Activated T-helper 2 cell treated with anti-CD3 and anti-CD28 coated beads, Interferon-gamma antibody, Interleukin-2, Interleukin-4, amounts not matched to agents 10 μg/mL and 5 μg/mL and 100 μg/mL, durations not matched to agents 14 hours and 24 hours and 36 hours (primary cell): ENCODE measurements at regions of chr11 and their contacts with region 1.

Region 1: DNA sequence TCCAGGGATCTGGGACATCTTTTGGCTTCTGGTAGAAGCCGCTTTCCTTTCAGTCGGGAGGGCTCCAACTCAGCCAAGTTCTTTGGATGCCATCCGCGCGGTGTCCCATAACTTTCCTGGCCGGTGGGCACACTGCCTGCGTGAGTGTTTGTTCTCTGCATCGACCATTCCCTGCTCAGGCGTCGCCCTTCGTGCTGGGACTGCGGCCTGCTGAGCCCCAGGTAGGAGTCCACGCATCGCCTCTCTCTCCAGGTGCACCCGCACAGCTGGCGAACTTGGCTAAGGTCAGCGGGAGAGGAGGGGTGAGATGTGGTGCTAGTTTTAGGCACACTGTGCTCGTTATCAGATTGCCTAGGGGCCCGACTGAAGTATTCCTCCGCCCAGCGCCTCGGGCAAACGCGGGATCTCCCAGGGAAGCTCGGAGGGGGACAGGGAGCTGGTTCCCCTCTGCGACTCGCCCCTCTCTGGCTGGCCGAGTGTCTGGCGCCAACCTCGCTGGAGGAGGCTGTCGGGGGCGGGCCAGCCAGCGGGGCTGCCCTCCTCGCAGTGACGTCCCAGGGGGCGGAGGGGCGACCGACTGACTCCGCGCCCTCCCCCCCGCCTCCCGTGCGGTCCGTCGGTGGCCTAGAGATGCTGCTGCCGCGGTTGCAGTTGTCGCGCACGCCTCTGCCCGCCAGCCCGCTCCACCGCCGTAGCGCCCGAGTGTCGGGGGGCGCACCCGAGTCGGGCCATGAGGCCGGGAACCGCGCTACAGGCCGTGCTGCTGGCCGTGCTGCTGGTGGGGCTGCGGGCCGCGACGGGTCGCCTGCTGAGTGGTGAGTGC is at the start of gene LAYN:
- DNase-seq: peak; percentile 14
- H3K4me3 Mint-ChIP-seq: peak within 1 kb of the TSS; percentile 72
- H3K27ac Mint-ChIP-seq: peak within 1 kb of the TSS; percentile 65
- H3K4me1 Mint-ChIP-seq: peaks cover 24% of the 10 kb centered on the region
- H3K27me3 Mint-ChIP-seq: peaks cover 72% of the 10 kb centered on the region
- total RNA-seq, gene LAYN: 15.8 and 16.5 TPM in 2 replicates

Region 2: GRCh38 chr11:111063726-111064517 is 476.4 kb before region 1 on chr11:
- intact Hi-C with region 1: no loop called
- DNase-seq: no peak
- H3K4me3 Mint-ChIP-seq: no peak overlapping the region
- H3K27ac Mint-ChIP-seq: no peak overlapping the region
- H3K4me1 Mint-ChIP-seq: no peaks in the 10 kb centered on the region
- H3K27me3 Mint-ChIP-seq: no peaks in the 10 kb centered on the region

Region 3: DNA sequence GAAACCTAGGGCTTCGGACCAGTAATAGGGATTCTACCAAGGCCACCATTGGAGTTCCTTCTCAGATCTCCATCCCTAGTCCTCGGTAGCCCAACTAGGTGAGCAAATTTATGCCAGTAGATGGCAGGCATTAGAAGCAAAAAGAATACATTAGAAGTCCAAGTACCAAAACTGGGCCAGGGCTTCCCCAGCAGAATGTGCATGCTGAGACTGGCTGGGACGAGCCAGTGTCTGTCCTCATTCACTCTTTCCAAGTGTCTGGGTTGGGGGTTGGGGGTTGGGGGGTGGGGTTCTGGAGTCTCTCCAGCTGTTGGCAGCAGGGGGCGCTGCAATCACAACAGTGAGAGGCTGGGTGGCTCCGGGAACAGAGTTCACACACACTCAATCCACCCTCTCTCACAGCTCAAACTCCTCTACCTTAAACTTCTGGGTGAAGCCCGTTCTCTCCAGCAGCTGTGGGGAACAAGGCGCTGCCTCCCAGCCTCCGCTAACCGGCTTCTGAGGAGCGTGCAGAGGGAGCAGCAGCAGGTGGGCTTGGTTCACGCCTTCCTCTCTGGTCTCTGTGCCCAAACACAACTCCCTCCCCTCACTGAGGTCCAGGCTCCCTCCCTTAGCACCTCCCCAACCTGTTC is 85.6 kb before region 1 on chr11:
- intact Hi-C with region 1: loop called (anchors 5 kb)
- DNase-seq: no peak
- H3K4me3 Mint-ChIP-seq: no peak overlapping the region
- H3K27ac Mint-ChIP-seq: no peak overlapping the region
- H3K4me1 Mint-ChIP-seq: no peaks in the 10 kb centered on the region
- H3K27me3 Mint-ChIP-seq: peaks cover 9% of the 10 kb centered on the region

Region 4: GRCh38 chr11:111520565-111520964 is 19.8 kb before region 1 on chr11:
- intact Hi-C with region 1: loop called (anchors 2 kb)
- DNase-seq: no peak
- H3K4me3 Mint-ChIP-seq: no peak overlapping the region
- H3K27ac Mint-ChIP-seq: no peak overlapping the region
- H3K4me1 Mint-ChIP-seq: peaks cover 27% of the 10 kb centered on the region
- H3K27me3 Mint-ChIP-seq: peaks cover 1% of the 10 kb centered on the region

Region 5: GRCh38 chr11:111526501-111526900 is 13.8 kb before region 1 on chr11:
- intact Hi-C with region 1: loop called (anchors 2 kb)
- DNase-seq: no peak
- H3K4me3 Mint-ChIP-seq: no peak overlapping the region
- H3K27ac Mint-ChIP-seq: peak overlapping the region; percentile 49
- H3K4me1 Mint-ChIP-seq: peaks cover 42% of the 10 kb centered on the region
- H3K27me3 Mint-ChIP-seq: no peaks in the 10 kb centered on the region